GM12878 (cell line): ENCODE measurements at regions of chr18 and their contacts with region 1.

Region 1: DNA sequence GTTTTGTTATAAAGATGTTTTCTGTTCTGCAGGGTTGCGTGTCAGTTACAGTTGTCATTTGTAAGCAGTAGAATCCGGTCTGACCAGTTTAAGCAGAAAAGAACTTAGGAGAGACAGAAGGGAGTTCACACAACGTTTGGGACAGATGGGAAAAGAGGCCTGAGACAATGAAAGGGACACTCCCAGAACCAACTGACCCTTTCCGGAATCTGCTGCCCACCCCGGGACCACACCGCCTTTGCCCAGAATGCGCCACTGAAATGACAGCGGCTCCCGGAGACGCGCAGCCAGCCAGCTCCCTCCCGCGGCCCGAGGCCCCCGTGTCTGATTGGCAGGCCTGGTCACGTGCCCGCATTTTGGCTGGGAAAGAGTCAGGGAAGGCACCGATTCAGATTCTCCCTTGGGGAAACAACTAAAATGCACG is 244.6 kb downstream of the BCL2 start:
- DNase-seq: no peak
- ATAC-seq: peak; percentile 40
- H3K4me3 ChIP-seq: peak overlapping the region; percentile 45; the same call in 1 of the 2 replicates
- H3K27ac ChIP-seq: peak overlapping the region; percentile 60
- H3K4me1 ChIP-seq: peaks cover 17% of the 10 kb centered on the region
- H3K27me3 ChIP-seq: no peaks in the 10 kb centered on the region
- CTCF ChIP-seq: no peak
- EP300 ChIP-seq: no peak
- POLR2A ChIP-seq: peak; percentile 76
- RAD21 ChIP-seq: no peak

Region 2: GRCh38 chr18:63025251-63026090 is 49.5 kb before region 1 on chr18:
- CTCF ChIA-PET with region 1: interaction called, 44 read pairs
- POLR2A ChIA-PET with region 1: no interaction called
- RAD21 ChIA-PET with region 1: interaction called, 8 read pairs
- SMC1A ChIA-PET with region 1: interaction called, 28 read pairs
- in situ Hi-C with region 1: no loop called
- intact Hi-C with region 1: no loop called
- DNase-seq: no peak
- ATAC-seq: peak; percentile 59; the same call in 2 of the 3 replicates
- H3K4me3 ChIP-seq: no peak overlapping the region
- H3K27ac ChIP-seq: no peak overlapping the region
- H3K4me1 ChIP-seq: no peaks in the 10 kb centered on the region
- H3K27me3 ChIP-seq: no peaks in the 10 kb centered on the region
- CTCF ChIP-seq: peak; percentile 36 to 59 (median 40); a peak in 4 of 6 replicates
- EP300 ChIP-seq: no peak
- POLR2A ChIP-seq: no peak
- RAD21 ChIP-seq: peak; percentile 72

Region 3: DNA sequence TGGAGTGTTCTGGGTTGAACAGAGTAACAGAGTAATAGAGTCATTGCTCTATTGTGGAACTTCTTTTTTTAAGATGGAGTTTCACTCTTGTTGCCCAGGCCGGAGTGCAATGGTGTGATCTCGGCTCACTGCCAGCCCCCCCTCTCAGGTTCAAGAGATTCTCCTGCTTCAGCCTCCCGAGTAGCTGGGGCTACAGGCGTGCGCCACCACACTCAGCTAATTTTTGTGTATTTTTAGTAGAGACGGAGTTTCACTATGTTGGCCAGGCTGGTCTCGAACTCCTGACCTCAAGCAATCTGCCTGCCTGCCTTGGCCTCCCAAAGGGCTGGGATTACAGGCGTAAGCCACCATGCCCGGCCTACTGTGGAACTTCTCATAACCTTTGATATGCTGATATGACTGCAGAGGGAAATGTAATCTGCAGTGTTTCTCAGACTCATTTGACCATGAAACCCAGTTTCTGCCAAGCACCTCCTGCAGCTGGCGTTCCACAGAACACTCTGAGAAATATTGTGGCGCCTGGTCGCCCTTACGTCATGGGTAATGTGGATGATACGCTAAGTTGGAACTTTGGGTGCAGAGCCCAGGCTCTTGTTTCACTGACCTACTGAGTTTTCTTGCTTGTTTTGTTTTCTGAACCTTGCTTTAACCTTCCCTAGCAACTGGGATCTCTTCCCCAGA is 30.8 kb after region 1 on chr18:
- CTCF ChIA-PET with region 1: no interaction called
- POLR2A ChIA-PET with region 1: no interaction called
- RAD21 ChIA-PET with region 1: interaction called, 3 read pairs
- SMC1A ChIA-PET with region 1: interaction called, 8 read pairs
- in situ Hi-C with region 1: no loop called
- intact Hi-C with region 1: loop called (anchors 1 kb)
- DNase-seq: peak; percentile 73
- ATAC-seq: peak; percentile 81
- H3K4me3 ChIP-seq: peak overlapping the region; percentile 36; the same call in 1 of the 2 replicates
- H3K27ac ChIP-seq: peak overlapping the region; percentile 97
- H3K4me1 ChIP-seq: peaks cover 28% of the 10 kb centered on the region
- H3K27me3 ChIP-seq: no peaks in the 10 kb centered on the region
- CTCF ChIP-seq: no peak
- EP300 ChIP-seq: peak in 1 of 2 experiments; percentile 7; a peak in 1 of 4 replicates
- POLR2A ChIP-seq: no peak
- RAD21 ChIP-seq: no peak